Mammary epithelial cell (primary cell): ENCODE measurements at regions of chr9 and their contacts with region 1.

Region 1: DNA sequence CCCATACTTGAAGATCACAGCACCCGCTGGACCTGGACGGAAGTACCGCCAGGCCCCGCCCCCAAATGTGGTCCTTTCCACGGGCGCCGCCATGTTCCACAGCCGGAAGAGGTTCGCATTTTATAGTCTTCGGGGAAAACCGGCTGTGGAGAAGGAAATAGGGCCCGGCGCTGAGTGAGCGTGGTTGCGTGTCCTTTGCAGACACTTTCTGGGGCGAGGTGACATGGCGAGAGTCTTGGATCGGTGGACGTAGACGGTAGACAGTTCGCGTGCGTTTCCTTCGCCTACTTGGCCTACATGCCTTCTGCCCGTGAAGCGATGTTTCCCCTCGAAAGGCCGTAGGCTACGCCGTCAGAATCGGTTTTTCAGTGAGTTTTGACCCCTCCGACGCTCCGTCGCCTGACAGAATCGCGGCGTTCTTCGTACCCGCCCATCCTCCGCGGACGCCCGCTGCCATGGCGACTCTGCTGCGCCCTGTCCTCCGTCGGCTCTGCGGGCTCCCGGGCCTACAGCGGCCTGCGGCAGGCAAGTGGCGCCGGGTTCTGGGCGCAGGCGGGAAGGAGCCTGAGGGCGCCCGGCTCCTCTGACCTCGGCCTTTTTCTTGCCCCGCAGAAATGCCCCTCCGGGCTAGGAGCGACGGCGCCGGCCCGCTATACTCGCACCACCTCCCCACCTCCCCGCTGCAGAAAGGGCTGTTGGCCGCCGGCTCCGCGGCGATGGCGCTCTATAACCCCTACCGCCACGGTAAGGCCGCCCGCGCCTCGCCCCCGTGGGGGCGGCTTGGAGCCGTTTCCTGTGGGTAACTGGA is at the starts of genes COQ4 and TRUB2:
- DNase-seq: peak; percentile 94
- H3K4me3 ChIP-seq: peak within 1 kb of the TSS; percentile 68 to 97 (median 68)
- H3K27ac ChIP-seq: peak within 1 kb of the TSS; percentile 88
- H3K4me1 ChIP-seq: peaks cover 14% of the 10 kb centered on the region
- H3K27me3 ChIP-seq: no peaks in the 10 kb centered on the region
- CTCF ChIP-seq: no peak
- total RNA-seq, gene COQ4: 32.7 to 33.7 TPM
- total RNA-seq, gene TRUB2: 14.7 to 28.6 TPM

Region 2: GRCh38 chr9:128175102-128175563 is 147.5 kb before region 1 on chr9:
- CTCF ChIA-PET with region 1: no interaction called
- dilution Hi-C with region 1: no loop called
- in situ Hi-C with region 1: no loop called
- intact Hi-C with region 1: no loop called
- DNase-seq: no peak
- H3K4me3 ChIP-seq: no peak overlapping the region
- H3K27ac ChIP-seq: no peak overlapping the region
- H3K4me1 ChIP-seq: no peaks in the 10 kb centered on the region
- H3K27me3 ChIP-seq: no peaks in the 10 kb centered on the region
- CTCF ChIP-seq: no peak

Region 3: DNA sequence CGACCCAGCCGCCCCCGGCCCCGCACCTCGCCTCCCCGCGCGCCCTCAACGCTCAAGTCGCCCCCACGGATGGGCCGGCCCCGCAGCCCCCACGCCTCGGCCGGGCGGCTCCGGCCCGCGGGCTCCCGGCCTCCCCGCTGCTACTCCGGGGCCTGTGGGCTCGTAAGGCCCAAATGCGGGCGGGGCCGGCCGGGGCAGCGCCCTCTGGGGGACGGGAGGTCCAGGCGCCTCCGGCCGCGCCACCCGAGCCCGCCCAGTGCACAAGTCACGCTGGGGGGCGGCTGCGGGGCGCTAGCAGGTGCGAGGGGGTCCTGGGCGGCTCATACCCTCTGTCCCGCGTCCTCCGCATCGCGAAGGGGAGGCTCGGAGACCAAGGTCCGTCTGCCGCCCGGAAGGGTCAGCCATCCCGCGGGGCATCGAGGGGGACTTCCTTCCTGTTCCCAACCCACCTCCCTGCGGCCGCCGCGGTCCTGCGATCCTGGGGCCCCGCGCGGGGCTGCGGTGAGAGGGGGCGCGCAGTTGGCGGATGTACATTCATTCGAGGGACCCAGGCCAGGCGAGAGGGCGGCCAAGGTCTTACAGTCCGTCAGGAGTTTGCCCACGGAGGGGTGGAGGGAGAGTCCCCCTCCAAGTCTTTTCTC is 131.1 kb before region 1 on chr9 and contains the start of gene CIZ1:
- CTCF ChIA-PET with region 1: no interaction called
- dilution Hi-C with region 1: no loop called
- in situ Hi-C with region 1: no loop called
- intact Hi-C with region 1: loop called (anchors 5 kb)
- DNase-seq: peak; percentile 63
- H3K4me3 ChIP-seq: peak within 1 kb of the TSS; percentile 84 to 90 (median 88)
- H3K27ac ChIP-seq: peak within 1 kb of the TSS; percentile 26
- H3K4me1 ChIP-seq: peaks cover 19% of the 10 kb centered on the region
- H3K27me3 ChIP-seq: no peaks in the 10 kb centered on the region
- CTCF ChIP-seq: peak; percentile 41 to 72
- total RNA-seq, gene CIZ1: 36.0 to 109 TPM

Region 4: DNA sequence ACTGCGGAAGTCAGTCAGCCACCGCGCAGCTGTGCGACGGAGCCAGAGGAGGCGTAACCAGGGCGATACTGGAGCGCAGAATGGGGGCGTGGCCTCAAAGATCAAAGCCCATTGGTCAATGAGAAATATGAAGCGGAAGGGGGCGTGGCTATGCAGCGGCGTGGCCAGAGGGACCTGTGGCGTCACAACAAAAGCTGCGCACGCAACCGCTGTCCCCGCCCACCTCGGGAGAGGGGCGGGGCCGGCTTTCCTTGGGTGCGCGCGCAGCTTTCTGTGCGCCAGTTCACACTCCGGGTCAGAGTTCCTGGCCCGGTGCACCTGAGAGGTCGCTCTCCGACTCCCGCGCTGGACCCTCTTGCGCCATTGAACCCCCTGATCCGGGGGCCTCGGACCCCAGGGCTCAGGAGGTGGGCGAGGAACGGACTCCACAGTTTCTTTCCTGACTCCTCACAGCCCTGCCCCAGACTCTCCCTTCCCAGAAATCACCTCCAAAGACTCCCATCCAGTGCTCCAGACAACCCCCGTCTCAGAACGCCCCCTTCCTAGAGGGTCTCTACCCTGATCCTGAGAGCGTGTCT is 46.5 kb before region 1 on chr9 and contains the starts of genes GOLGA2 and SWI5:
- CTCF ChIA-PET with region 1: no interaction called
- dilution Hi-C with region 1: no loop called
- in situ Hi-C with region 1: no loop called
- intact Hi-C with region 1: loop called (anchors 2 kb)
- DNase-seq: peak; percentile 98
- H3K4me3 ChIP-seq: peak within 1 kb of the TSS; percentile 94 to 96 (median 95)
- H3K27ac ChIP-seq: peak within 1 kb of the TSS; percentile 84
- H3K4me1 ChIP-seq: peaks cover 25% of the 10 kb centered on the region
- H3K27me3 ChIP-seq: no peaks in the 10 kb centered on the region
- CTCF ChIP-seq: no peak
- total RNA-seq, gene GOLGA2: 42.2 to 76.7 TPM
- total RNA-seq, gene SWI5: 13.5 to 26.3 TPM

Region 5: DNA sequence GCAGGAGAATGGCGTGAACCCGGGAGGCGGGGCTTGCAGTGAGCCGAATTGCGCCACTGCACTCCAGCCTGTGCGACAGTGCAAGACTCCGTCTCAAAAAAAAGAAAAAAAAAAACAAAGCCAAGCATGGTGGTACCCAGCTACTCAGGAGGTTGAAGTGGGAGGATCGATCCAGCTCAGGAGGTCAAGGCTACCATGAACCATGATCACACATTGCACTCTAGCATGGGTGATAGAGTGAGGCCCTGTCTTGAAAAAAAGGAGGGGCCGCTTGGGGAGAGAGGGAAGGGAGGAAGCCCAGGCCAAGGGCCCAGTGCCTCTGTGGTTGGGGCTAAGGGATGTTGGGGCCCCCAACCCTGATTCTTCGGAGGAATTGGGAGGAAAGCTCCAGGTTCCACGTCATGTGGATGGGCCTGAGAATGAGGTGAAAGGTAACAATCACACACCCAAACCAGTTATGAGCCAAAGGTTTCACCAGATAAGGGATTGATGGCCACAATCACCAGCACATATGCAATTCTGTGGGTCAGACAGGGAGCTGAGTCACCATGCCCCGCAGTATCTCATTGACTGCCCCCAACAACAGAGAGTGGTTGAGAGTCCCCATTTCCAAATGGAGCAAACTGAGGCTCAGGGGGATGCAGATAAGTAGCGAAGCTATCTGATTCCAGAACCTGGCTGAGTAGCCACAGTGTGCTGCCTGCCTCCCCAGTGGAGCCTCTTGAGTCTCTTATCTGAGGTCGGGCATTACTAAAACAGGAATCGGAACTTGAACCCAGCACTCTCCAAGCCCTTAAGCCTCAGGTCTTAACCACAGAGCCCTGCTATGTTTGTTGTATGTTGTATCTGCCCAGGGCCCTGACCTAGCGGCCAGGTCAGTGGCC is 26.0 kb before region 1 on chr9:
- CTCF ChIA-PET with region 1: no interaction called
- dilution Hi-C with region 1: no loop called
- in situ Hi-C with region 1: no loop called
- intact Hi-C with region 1: loop called (anchors 1 kb)
- DNase-seq: no peak
- H3K4me3 ChIP-seq: no peak overlapping the region
- H3K27ac ChIP-seq: no peak overlapping the region
- H3K4me1 ChIP-seq: no peaks in the 10 kb centered on the region
- H3K27me3 ChIP-seq: no peaks in the 10 kb centered on the region
- CTCF ChIP-seq: no peak

Region 6: DNA sequence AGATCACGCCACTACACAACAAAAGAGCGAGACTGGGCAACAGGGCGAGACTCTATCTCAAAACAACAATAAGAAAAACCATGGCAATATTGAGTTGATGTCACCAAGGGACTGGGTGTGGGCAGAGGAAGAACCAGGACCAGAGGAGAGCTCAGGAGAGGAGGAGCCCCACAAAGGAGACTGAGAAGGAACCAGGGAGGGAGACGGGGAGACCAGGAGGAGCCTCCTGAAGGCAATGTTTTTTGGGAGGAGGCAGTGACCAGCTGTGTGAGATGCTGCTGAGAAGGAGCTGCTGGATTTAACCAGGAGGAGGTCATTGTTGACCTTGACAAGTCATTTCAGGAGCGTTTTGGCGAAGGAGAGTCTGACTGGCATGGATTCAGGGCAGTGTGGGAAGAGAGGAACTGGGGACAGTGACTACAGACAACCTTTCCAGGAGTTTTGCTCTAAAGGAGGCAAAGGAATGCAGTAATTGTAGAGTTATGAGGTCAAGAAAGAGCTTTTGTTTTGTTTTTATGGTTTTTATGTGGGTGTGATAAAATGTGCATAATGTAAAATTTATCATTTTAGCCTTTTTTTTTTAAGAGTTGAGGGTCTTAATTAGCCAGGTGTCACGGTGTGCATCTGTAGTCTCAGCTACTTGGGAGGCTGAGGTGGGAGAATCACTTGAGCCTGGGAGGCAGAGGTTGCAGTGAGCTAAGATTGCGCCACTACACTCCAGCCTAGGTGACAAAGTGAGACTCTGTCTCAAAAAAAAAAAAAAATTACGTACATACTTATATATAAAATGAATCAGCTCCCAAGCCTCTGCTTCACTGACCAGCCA is 18.2 kb before region 1 on chr9:
- CTCF ChIA-PET with region 1: no interaction called
- dilution Hi-C with region 1: no loop called
- in situ Hi-C with region 1: no loop called
- intact Hi-C with region 1: loop called (anchors 1 kb)
- DNase-seq: no peak
- H3K4me3 ChIP-seq: no peak overlapping the region
- H3K27ac ChIP-seq: no peak overlapping the region
- H3K4me1 ChIP-seq: peaks cover 23% of the 10 kb centered on the region
- H3K27me3 ChIP-seq: no peaks in the 10 kb centered on the region
- CTCF ChIP-seq: no peak